ENCODE measurements at regions of chr18 and their contacts with region 1.

Region 1: GRCh38 chr18:47748847-47749599 is 181.4 kb downstream of the SMAD2 start:
- DNase-seq: peak; percentile 88

Region 2: GRCh38 chr18:47050468-47050867 is 698.6 kb before region 1 on chr18:
- intact Hi-C with region 1: loop called (anchors 5 kb)
- DNase-seq: no peak

Region 3: DNA sequence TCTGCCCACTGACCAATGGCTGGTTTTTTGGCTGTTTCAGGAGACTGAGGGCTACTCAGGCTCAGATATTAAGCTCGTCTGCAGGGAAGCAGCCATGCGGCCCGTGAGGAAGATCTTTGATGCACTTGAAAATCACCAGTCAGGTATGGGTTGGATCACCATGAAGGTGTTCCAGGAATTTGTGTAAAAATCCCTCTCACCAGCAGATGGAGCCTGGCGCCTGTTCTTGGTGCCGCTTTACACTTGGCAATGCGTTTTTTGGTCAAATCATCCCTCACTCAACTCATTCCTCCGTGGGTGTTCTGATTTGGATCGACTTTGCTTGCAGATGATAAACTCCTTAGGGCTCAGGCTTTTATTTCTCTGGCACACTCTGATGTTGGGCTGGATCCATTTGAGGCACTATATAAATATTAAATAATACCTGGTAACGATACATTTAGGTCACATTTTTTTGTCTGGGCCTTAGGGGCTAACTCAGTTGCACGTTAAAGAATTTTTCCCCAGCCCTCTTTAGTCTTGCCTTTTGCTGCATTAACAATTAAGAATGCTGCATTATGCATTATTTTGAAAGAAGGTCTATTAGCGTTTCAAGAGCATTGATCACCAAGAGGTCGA is 648.7 kb before region 1 on chr18:
- intact Hi-C with region 1: loop called (anchors 5 kb)
- DNase-seq: no peak

Region 4: GRCh38 chr18:47215554-47216138 is 533.4 kb before region 1 on chr18:
- intact Hi-C with region 1: loop called (anchors 2 kb)
- DNase-seq: no peak

Region 5: DNA sequence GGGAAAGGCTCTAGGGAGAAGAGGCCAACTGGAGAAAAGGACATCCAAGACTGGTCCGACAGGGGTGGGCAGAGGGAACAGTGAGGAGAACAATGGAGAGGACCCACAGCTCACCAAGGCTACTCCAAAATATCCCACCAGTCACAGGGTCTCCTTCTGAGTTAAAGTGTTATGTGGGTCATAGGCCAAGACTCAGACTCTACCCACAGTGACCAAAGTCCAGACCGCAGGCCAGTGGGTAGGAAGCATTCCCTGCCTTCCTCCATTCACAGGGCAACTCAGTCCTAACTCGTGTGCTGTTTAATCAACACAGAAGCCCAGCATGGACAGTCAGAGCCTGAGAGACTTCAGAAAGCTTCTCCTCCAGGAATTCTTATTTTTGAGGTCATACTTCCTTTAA is 79.2 kb before region 1 on chr18:
- intact Hi-C with region 1: no loop called
- DNase-seq: no peak

Region 6: DNA sequence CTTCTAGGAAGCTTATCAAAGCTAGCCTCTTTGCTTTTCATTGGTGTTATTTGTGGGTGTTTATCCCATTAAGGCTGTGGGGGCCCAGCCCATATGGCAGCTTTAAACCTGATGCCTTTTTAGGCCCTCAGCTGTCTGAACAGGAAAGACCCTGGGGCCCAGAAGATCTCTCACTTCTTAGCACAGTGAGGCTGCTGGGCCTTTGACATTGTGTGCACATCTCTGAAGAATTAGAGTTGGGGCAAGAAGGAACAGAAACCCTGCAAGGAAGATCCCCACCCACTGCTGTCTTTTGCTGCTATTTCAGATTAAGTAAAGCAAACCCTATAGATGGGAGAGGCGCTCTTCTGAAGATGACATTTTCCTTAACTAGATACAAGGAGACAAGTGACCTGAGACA is 68.5 kb before region 1 on chr18:
- intact Hi-C with region 1: no loop called
- DNase-seq: no peak